Naive thymus-derived CD4-positive, alpha-beta T cell (primary cell): ENCODE measurements at regions of chr6 and their contacts with region 1.

Region 1: DNA sequence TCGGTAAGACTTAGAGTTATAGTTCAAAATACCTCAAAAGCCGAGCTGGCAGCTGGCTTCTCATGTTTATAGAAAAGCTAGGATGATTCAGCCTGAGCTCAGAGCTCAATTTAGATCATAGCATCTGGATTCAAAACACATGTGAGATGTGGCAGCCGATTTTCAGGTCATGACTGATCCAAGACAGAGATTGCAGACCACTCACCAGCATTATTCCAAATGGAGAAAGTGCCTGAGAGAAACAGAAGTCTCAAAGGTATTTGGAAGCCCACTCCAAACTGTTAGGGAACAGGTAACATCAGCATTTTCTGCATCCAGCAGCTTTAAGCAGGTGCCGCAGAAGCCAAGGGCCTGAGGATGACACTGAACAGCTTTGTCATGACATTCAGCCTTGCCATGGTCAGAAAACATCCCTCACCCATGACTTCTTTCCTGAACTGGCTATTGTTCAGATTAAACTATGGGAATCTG is 102.2 kb downstream of the BACH2 start:
- DNase-seq: peak in 1 of 9 donors; percentile 37
- ATAC-seq: no peak
- H3K4me3 ChIP-seq: no peak overlapping the region
- H3K4me3 Mint-ChIP-seq: peak overlapping the region in 9 of 10 donors; percentile 21 to 81 (median 63)
- H3K27ac ChIP-seq: peak overlapping the region; percentile 63
- H3K27ac Mint-ChIP-seq: peak overlapping the region; percentile 31 to 96 (median 82)
- H3K4me1 ChIP-seq: peaks cover 0 to 61% of the 10 kb centered on the region in 2 donors
- H3K4me1 Mint-ChIP-seq: peaks cover 27 to 100% (median 90%) of the 10 kb centered on the region in 7 donors
- H3K27me3 ChIP-seq: no peaks in the 10 kb centered on the region
- H3K27me3 Mint-ChIP-seq: no peaks in the 10 kb centered on the region

Region 2: GRCh38 chr6:90209527-90209926 is 15.1 kb after region 1 on chr6:
- CTCF ChIA-PET with region 1: interaction called, 5 read pairs
- POLR2A ChIA-PET with region 1: interaction called, 3 read pairs
- intact Hi-C with region 1: loop called in 1 of 2 experiments (anchors 2 kb)
- DNase-seq: peak in 6 of 9 donors; percentile 32 to 58 (median 44)
- ATAC-seq: peak; percentile 34
- H3K4me3 ChIP-seq: no peak overlapping the region
- H3K4me3 Mint-ChIP-seq: peak overlapping the region; percentile 30 to 83 (median 74)
- H3K27ac ChIP-seq: peak overlapping the region; percentile 58
- H3K27ac Mint-ChIP-seq: peak overlapping the region in 6 of 9 donors; percentile 81 to 98 (median 94)
- H3K4me1 ChIP-seq: peaks cover 0 to 56% of the 10 kb centered on the region in 2 donors
- H3K4me1 Mint-ChIP-seq: peaks cover 0 to 100% (median 75%) of the 10 kb centered on the region in 7 donors
- H3K27me3 ChIP-seq: no peaks in the 10 kb centered on the region
- H3K27me3 Mint-ChIP-seq: no peaks in the 10 kb centered on the region

Region 3: DNA sequence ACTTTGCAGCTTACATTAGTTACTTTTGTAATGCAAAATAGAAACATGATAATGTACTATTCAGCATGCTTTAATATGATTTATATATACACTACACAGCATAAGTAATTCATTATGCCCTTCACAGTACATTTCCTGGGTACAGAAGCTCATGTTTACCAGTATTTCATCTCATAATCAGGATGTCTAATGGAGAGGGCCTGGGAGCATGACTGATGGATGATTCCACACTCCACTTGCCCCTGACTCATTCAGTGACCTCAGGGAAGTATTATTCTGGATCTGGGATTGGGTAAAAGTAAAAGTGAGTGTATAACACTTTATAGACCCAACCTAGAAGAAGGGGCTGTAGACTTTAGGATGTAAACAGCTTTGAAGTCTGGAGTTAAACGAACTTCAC is 133.6 kb after region 1 on chr6:
- CTCF ChIA-PET with region 1: no interaction called
- POLR2A ChIA-PET with region 1: no interaction called
- intact Hi-C with region 1: no loop called
- DNase-seq: no peak
- ATAC-seq: no peak
- H3K4me3 ChIP-seq: no peak overlapping the region
- H3K4me3 Mint-ChIP-seq: no peak overlapping the region
- H3K27ac ChIP-seq: no peak overlapping the region
- H3K27ac Mint-ChIP-seq: no peak overlapping the region
- H3K4me1 ChIP-seq: no peaks in the 10 kb centered on the region
- H3K4me1 Mint-ChIP-seq: no peaks in the 10 kb centered on the region
- H3K27me3 ChIP-seq: no peaks in the 10 kb centered on the region
- H3K27me3 Mint-ChIP-seq: no peaks in the 10 kb centered on the region

Region 4: GRCh38 chr6:91941838-91942237 is 1747.4 kb after region 1 on chr6:
- CTCF ChIA-PET with region 1: no interaction called
- POLR2A ChIA-PET with region 1: no interaction called
- intact Hi-C with region 1: no loop called
- DNase-seq: no peak
- ATAC-seq: no peak
- H3K4me3 ChIP-seq: no peak overlapping the region
- H3K4me3 Mint-ChIP-seq: no peak overlapping the region
- H3K27ac ChIP-seq: no peak overlapping the region
- H3K27ac Mint-ChIP-seq: no peak overlapping the region
- H3K4me1 ChIP-seq: no peaks in the 10 kb centered on the region
- H3K4me1 Mint-ChIP-seq: no peaks in the 10 kb centered on the region
- H3K27me3 ChIP-seq: no peaks in the 10 kb centered on the region
- H3K27me3 Mint-ChIP-seq: no peaks in the 10 kb centered on the region